ENCODE measurements at regions of chr18 and their contacts with region 1.

Region 1: DNA sequence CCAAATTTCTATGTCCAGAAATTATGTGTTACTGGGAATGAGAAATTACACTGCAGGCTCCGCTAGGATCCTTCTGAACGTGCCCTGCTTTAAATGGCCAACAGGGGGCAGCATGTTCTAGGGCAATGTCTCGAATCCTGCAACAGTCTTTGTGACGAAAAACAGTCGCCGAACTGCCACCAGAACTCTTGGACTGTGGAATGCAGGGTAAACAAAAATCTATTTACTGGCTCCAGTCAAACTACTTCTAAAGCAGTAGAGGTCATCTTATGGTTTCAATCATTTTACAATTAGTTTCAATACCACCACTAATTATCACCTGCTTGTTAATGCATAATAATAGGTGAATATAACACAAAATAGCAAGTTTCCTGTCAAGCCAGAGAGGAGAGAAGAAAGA is 9.8 kb upstream of the ZNF397 start:
- DNase-seq: peak; percentile 64
- CTCF ChIP-seq: peak; percentile 86

Region 2: DNA sequence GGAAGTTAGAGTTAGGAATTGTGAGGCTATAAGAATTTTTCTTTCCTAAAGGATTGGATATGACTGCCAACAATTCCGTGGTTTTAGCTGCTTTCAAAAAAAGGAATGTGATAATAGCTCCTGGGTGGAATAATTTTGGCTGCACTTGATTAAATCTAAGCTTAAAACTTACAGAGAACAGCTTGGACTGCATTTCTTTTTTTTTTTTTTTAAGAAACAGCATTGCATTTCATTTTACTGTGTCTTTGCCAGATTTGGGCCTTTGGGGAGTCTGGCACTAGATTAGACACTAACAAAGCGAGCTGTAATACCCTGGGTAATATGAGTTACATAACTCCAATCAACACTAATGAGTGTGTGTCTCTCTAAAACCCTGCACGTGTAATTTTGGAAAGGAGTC is 28.0 kb before region 1 on chr18:
- CTCF ChIA-PET with region 1: interaction called, 17 read pairs
- POLR2A ChIA-PET with region 1: no interaction called
- DNase-seq: no peak
- CTCF ChIP-seq: no peak

Region 3: DNA sequence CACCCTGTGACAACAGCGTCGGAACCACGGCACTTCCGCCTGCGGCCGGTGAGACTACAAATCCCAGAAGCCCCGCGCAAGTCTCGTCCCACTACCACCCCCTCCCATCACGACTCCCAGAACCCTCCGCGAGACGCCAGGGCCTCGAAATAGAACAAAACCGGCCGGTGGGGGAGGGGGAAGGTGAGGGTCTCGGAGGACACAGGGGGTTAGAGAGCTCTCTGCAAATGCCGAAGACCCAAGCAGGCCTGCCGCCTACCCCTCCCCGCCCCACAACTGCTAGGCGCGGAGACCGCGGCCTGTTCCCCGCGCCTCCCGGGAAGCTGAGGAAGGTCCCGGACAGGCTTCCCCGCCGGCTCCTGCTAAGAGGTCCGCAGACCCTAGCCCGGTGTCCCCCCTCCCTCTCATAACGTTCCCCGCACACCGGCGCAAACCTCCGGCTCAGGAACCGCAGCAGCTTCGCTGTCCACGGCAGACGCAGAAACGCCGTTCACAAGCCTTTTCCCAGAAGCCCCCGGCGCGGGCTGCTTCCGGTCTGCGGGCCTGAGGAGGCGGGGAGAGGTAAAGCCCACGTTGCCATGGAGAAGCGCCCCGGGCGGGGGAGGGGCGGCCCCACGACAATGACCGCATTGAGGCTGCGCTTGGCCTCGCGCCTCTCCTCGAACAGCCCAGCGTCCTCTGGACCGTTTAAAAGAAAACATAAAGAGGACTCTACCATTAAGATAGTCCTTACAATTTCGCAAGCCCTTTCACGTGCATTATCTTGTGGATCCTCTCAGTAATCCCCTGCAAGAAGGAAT is 113.1 kb after region 1 on chr18 and contains the start of gene ZNF24:
- CTCF ChIA-PET with region 1: interaction called, 22 read pairs
- POLR2A ChIA-PET with region 1: no interaction called
- DNase-seq: peak; percentile 97
- CTCF ChIP-seq: no peak

Region 4: DNA sequence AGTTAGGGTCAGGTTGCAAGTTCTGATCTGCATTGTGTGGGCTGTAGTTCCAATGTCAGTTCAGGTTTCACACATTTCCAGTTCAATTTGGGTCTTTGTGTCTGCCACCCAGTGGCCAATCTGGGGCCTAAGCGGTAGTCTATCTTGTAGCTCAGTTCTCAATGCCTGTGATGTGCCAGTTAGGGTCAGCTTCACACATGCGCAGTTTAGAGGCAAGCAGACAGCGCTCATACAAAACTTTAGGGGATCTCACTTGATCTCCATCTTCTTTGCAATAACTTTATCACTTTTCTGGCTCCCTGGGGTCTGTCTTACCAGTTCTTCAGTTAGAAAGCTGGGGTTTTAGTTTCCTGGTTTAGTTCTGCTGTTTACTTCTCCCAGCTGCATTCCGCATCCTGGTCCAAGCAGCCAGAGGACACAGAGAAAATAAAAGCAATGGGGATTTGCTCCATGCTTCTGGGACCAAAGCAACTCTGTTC is 124.1 kb after region 1 on chr18:
- CTCF ChIA-PET with region 1: interaction called, 12 read pairs
- POLR2A ChIA-PET with region 1: no interaction called
- DNase-seq: peak; percentile 57
- CTCF ChIP-seq: peak; percentile 69

Region 5: DNA sequence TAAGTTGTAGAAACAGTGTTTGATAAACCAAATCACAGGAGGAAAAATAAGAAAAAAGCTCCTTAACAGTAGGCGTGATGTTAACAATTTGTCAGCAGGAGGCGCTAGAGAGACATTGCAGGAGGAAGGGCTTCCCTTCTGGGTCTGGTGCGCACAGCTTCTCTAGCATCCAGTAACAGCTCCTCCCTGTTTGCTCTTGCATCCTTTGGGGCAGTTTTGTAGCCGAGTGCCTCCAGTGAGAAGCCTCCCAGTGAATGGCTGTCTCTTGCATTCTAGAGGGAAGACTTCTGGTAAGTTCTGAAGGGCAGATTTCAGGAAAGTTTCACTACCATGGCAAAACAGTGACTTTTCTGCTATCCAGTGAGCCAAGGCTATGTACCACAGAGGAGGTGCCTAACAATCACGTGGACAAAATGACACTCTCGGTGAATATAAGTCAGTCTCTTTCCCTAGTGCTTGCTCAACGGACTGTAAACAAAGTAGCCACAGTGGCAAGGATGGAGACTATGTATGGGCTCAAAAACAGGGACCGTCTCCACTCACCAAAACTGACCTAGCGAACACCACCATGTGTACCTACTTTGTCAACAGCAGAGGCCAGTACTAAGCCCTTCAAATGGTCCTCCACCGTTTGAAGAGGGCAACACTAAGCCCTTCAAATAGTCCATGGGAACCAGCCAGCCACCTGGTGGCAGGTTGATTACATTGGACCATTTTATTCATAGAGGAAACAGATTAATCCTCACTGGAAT is 155.7 kb after region 1 on chr18:
- CTCF ChIA-PET with region 1: interaction called, 10 read pairs
- POLR2A ChIA-PET with region 1: no interaction called
- DNase-seq: peak; percentile 70
- CTCF ChIP-seq: peak; percentile 83